ENCODE measurements at regions of chr7 and their contacts with region 1.

Region 1: DNA sequence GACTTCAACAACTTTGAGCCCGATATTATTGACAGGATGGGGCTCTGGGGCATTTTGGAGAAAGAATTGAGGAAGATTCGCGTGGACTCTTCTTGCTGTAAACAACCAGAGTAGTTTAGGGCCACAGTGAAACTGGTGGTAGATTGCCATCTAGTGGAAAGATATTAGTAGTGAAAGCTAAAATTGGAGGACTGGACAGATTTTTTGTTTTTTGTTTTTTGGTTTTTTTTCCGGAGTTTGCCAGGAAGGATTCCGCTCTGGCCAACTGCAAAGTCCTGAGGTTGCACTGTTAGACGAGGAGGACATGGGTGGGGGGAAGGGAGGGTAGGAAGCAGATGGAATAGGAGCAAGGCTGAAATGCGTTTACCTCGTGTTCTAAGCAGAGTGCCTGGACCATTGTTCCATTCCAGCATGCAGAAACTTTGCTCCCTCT is 11.7 kb downstream of the NOBOX start:
- DNase-seq: peak; percentile 66
- H3K4me3 ChIP-seq: peak overlapping the region in 1 of 2 experiments; percentile 34; a peak in 3 of 4 replicates
- H3K27ac ChIP-seq: no peak overlapping the region
- H3K4me1 ChIP-seq: no peaks in the 10 kb centered on the region
- H3K27me3 ChIP-seq: peaks cover 30% of the 10 kb centered on the region; the same call in 1 of the 2 replicates
- CTCF ChIP-seq: peak; percentile 90
- EP300 ChIP-seq: no peak
- RAD21 ChIP-seq: peak; percentile 92

Region 2: DNA sequence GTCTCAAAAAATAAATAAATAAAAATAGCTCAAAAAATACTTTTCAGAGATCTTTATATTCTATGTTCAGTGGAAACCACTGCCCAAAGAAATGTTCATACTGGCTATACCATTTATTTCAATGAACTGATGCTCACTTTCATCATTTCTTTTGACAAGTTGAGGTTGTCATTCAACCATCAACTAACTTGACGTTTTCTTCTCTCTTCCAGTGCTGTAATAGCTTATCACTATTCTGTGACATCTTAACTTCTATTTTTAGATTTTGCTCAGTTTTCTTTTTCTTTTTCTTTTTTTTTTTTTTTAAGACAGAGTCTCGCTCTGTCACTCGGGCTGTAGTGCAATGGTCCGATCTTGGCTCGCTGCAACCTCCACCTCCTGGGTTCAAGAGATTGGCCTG is 217.2 kb before region 1 on chr7:
- CTCF ChIA-PET with region 1: interaction called, 14 read pairs
- POLR2A ChIA-PET with region 1: no interaction called
- DNase-seq: no peak
- H3K4me3 ChIP-seq: no peak overlapping the region
- H3K27ac ChIP-seq: no peak overlapping the region
- H3K4me1 ChIP-seq: no peaks in the 10 kb centered on the region
- H3K27me3 ChIP-seq: no peaks in the 10 kb centered on the region
- CTCF ChIP-seq: no peak
- EP300 ChIP-seq: no peak
- RAD21 ChIP-seq: no peak

Region 3: DNA sequence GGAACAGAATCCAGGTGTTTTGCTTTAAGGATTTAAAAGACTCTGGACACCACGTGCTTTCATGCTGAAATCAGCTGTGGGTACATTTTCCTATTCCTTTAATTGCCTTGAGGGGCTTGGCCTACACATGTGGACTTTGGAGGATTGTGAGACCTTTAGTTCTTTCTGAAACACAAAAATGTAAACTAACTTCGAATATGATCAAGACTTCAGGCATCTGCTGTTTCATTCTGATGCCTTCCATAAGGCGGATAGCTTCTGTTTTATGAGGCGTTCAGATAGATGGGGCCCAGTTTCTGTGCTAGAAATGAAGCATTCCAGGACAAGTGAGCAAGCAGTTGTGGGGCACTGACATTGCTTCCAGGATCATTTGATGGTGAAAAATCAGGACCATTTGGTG is 13.1 kb after region 1 on chr7:
- CTCF ChIA-PET with region 1: interaction called, 36 read pairs
- POLR2A ChIA-PET with region 1: no interaction called
- DNase-seq: no peak
- H3K4me3 ChIP-seq: no peak overlapping the region
- H3K27ac ChIP-seq: no peak overlapping the region
- H3K4me1 ChIP-seq: no peaks in the 10 kb centered on the region
- H3K27me3 ChIP-seq: peaks cover 54% of the 10 kb centered on the region; the same call in 1 of the 2 replicates
- CTCF ChIP-seq: no peak
- EP300 ChIP-seq: no peak
- RAD21 ChIP-seq: no peak

Region 4: DNA sequence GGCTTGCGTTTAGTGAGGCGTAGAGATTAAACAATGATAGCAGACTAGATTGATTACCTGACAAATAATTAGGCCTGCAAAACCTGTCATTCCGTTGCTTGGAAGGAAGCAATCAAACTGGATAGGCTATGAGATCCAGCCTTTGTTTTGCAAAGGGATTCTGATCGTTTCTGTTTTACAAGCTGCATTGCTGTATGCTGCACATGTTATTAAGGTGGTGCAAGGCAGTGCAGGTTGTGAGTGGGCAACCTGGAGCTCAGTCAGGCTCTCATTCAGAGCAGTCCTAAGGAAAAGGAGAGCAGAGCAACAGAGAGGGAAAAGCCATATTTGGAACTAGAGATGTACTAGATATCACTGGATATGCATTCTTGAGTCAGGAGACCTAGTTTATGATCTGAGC is 18.6 kb after region 1 on chr7:
- CTCF ChIA-PET with region 1: interaction called, 36 read pairs
- POLR2A ChIA-PET with region 1: no interaction called
- DNase-seq: no peak
- H3K4me3 ChIP-seq: no peak overlapping the region
- H3K27ac ChIP-seq: no peak overlapping the region
- H3K4me1 ChIP-seq: no peaks in the 10 kb centered on the region
- H3K27me3 ChIP-seq: peaks cover 36% of the 10 kb centered on the region; the same call in 1 of the 2 replicates
- CTCF ChIP-seq: no peak
- EP300 ChIP-seq: no peak
- RAD21 ChIP-seq: no peak

Region 5: DNA sequence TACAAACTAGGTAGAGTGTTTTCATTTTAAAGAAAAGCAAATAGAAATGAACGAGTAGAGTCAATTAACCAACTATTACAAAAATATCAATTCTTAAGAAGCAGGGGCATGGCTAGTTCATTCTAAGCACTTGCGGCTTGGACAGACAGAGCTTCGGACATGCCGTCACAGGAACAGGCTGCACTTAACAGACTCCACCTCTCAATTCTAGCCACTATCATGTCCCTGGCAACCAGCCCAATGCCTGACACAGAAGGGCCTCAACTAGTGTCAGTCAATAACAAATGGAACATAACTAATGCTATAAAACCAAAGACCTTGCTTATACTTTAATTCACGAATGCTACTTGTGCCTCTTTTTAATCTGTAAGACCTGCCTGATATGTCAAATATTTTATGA is 369.7 kb after region 1 on chr7:
- CTCF ChIA-PET with region 1: no interaction called
- POLR2A ChIA-PET with region 1: no interaction called
- DNase-seq: no peak
- H3K4me3 ChIP-seq: no peak overlapping the region
- H3K27ac ChIP-seq: no peak overlapping the region
- H3K4me1 ChIP-seq: no peaks in the 10 kb centered on the region
- H3K27me3 ChIP-seq: no peaks in the 10 kb centered on the region
- CTCF ChIP-seq: no peak
- EP300 ChIP-seq: no peak
- RAD21 ChIP-seq: no peak